ENCODE measurements at regions of chr18 and their contacts with region 1.

Region 1: GRCh38 chr18:59957971-59958595 is 58.3 kb downstream of the PMAIP1 start:
- DNase-seq: no peak
- ATAC-seq: peak; percentile 43
- H3K4me3 ChIP-seq: no peak overlapping the region
- H3K27ac ChIP-seq: peak overlapping the region; percentile 10; the same call in 1 of the 2 replicates
- H3K4me1 ChIP-seq: peaks cover 50% of the 10 kb centered on the region
- H3K27me3 ChIP-seq: no peaks in the 10 kb centered on the region
- CTCF ChIP-seq: no peak
- EP300 ChIP-seq: no peak
- POLR2A ChIP-seq: no peak
- RAD21 ChIP-seq: no peak

Region 2: GRCh38 chr18:59846814-59847490 is 111.1 kb before region 1 on chr18:
- CTCF ChIA-PET with region 1: interaction called, 4 read pairs
- POLR2A ChIA-PET with region 1: interaction called, 7 read pairs
- RAD21 ChIA-PET with region 1: interaction called, 5 read pairs
- SMC1A ChIA-PET with region 1: interaction called, 11 read pairs
- in situ Hi-C with region 1: no loop called
- intact Hi-C with region 1: no loop called
- DNase-seq: peak; percentile 83
- ATAC-seq: peak; percentile 93
- H3K4me3 ChIP-seq: peak overlapping the region; percentile 8; the same call in 1 of the 2 replicates
- H3K27ac ChIP-seq: peak overlapping the region; percentile 82
- H3K4me1 ChIP-seq: peaks cover 24% of the 10 kb centered on the region
- H3K27me3 ChIP-seq: no peaks in the 10 kb centered on the region
- CTCF ChIP-seq: no peak
- EP300 ChIP-seq: peak in 1 of 2 experiments; percentile 37; a peak in 1 of 4 replicates
- POLR2A ChIP-seq: no peak
- RAD21 ChIP-seq: peak; percentile 26; the same call in 1 of the 2 replicates

Region 3: DNA sequence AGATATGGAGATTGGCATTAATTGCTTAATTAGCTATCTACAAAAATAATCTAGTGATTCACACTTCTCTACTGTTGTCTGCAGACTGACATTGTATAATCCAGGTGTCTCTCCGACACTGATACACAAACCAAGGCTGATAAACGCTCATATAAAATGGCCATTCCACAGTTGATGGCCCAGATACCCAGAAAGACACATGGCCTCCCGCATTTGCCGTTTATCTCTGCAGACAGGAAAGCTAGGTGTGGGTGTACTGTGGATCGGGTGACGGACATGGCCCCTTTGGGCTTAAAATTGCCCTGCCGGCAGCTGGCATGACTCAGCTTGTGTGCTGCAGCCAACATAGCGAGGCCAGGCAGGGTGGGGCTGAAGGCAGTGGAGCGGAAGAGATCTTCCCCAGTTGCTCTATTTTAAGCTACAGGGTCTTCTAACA is 39.7 kb before region 1 on chr18:
- CTCF ChIA-PET with region 1: interaction called, 15 read pairs
- POLR2A ChIA-PET with region 1: interaction called, 23 read pairs
- RAD21 ChIA-PET with region 1: interaction called, 54 read pairs
- SMC1A ChIA-PET with region 1: interaction called, 257 read pairs
- in situ Hi-C with region 1: no loop called
- intact Hi-C with region 1: no loop called
- DNase-seq: peak; percentile 80
- ATAC-seq: peak; percentile 82
- H3K4me3 ChIP-seq: peak overlapping the region; percentile 5; the same call in 1 of the 2 replicates
- H3K27ac ChIP-seq: peak overlapping the region; percentile 74
- H3K4me1 ChIP-seq: peaks cover 47% of the 10 kb centered on the region
- H3K27me3 ChIP-seq: no peaks in the 10 kb centered on the region
- CTCF ChIP-seq: no peak
- EP300 ChIP-seq: peak in 1 of 2 experiments; percentile 27; a peak in 1 of 4 replicates
- POLR2A ChIP-seq: peak; percentile 44; the same call in 1 of the 2 replicates
- RAD21 ChIP-seq: no peak

Region 4: GRCh38 chr18:59941331-59941730 is 16.8 kb before region 1 on chr18:
- CTCF ChIA-PET with region 1: interaction called, 4 read pairs
- POLR2A ChIA-PET with region 1: interaction called, 5 read pairs
- RAD21 ChIA-PET with region 1: interaction called, 6 read pairs
- SMC1A ChIA-PET with region 1: interaction called, 14 read pairs
- in situ Hi-C with region 1: no loop called
- intact Hi-C with region 1: no loop called
- DNase-seq: no peak
- ATAC-seq: 0 out of 3 replicates have a peak, but pooled peaks have one; percentile 23
- H3K4me3 ChIP-seq: no peak overlapping the region
- H3K27ac ChIP-seq: no peak overlapping the region
- H3K4me1 ChIP-seq: peaks cover 7% of the 10 kb centered on the region; the same call in 1 of the 2 replicates
- H3K27me3 ChIP-seq: no peaks in the 10 kb centered on the region
- CTCF ChIP-seq: no peak
- EP300 ChIP-seq: no peak
- POLR2A ChIP-seq: no peak
- RAD21 ChIP-seq: no peak

Region 5: GRCh38 chr18:59988098-59988706 is 30.1 kb after region 1 on chr18:
- CTCF ChIA-PET with region 1: interaction called, 23 read pairs
- POLR2A ChIA-PET with region 1: interaction called, 3 read pairs
- RAD21 ChIA-PET with region 1: interaction called, 20 read pairs
- SMC1A ChIA-PET with region 1: interaction called, 27 read pairs
- in situ Hi-C with region 1: no loop called
- intact Hi-C with region 1: no loop called
- DNase-seq: no peak
- ATAC-seq: peak; percentile 81
- H3K4me3 ChIP-seq: no peak overlapping the region
- H3K27ac ChIP-seq: no peak overlapping the region
- H3K4me1 ChIP-seq: no peaks in the 10 kb centered on the region
- H3K27me3 ChIP-seq: no peaks in the 10 kb centered on the region
- CTCF ChIP-seq: peak; percentile 83 to 90 (median 87)
- EP300 ChIP-seq: no peak
- POLR2A ChIP-seq: no peak
- RAD21 ChIP-seq: peak; percentile 96

Measured in GM12878 (cell line).